Transverse colon (tissue), 4 donors: ENCODE measurements at regions of chrX and their contacts with region 1.

Region 1: DNA sequence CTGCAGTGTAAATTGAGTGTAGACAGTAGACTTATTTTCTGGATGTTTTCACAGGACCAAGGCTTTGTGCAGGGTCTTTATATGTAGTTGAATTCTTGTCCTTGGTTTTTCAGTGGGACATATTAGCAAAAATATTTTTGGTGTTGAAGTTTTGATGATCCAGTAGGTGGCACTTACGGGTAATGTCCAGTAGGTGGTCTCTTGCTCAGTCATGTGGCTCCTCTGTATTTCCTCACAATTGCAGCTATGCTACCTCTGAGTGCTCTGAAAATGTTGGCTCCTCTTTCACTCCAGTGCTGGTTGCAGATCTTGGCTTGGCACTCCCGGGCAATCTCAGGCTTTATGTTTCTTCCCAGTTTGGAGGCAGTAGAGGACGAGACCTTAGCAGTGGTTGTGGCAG is 419.8 kb upstream of the AMOT start:
- DNase-seq: no peak
- H3K4me3 ChIP-seq: no peak overlapping the region
- H3K27ac ChIP-seq: no peak overlapping the region
- H3K4me1 ChIP-seq: no peaks in the 10 kb centered on the region
- H3K27me3 ChIP-seq: no peaks in the 10 kb centered on the region
- CTCF ChIP-seq: no peak
- EP300 ChIP-seq: no peak
- POLR2A ChIP-seq: no peak

Region 2: DNA sequence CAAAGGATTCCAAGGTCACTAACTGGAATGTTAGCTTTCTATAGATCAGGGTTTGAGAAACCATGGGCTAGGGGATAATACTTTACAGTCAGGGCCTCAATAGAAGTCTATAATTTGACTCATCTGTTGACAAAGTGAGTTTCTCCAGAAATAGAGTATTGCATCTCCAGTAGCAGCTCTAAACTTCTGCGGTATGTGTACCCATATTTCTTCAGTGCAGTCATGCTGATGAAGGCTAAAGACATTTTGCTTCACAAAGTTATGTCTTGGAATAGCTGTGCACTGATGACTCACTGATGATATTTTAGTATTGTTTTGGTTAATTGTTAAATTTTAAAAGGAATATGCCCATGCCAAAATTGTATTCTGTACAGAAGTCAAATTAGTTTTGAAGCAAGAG is 45.0 kb after region 1 on chrX:
- in situ Hi-C with region 1: no loop called
- intact Hi-C with region 1: loop called (anchors 2 kb)
- DNase-seq: no peak
- H3K4me3 ChIP-seq: no peak overlapping the region
- H3K27ac ChIP-seq: no peak overlapping the region
- H3K4me1 ChIP-seq: no peaks in the 10 kb centered on the region
- H3K27me3 ChIP-seq: no peaks in the 10 kb centered on the region
- CTCF ChIP-seq: no peak
- EP300 ChIP-seq: no peak
- POLR2A ChIP-seq: no peak

Region 3: GRCh38 chrX:113412106-113412505 is 151.6 kb after region 1 on chrX:
- in situ Hi-C with region 1: no loop called
- intact Hi-C with region 1: no loop called
- DNase-seq: no peak
- H3K4me3 ChIP-seq: no peak overlapping the region
- H3K27ac ChIP-seq: no peak overlapping the region
- H3K4me1 ChIP-seq: no peaks in the 10 kb centered on the region
- H3K27me3 ChIP-seq: no peaks in the 10 kb centered on the region
- CTCF ChIP-seq: no peak
- EP300 ChIP-seq: no peak
- POLR2A ChIP-seq: no peak